Naive thymus-derived CD4-positive, alpha-beta T cell (primary cell): ENCODE measurements at regions of chr16 and their contacts with region 1.

Region 1: DNA sequence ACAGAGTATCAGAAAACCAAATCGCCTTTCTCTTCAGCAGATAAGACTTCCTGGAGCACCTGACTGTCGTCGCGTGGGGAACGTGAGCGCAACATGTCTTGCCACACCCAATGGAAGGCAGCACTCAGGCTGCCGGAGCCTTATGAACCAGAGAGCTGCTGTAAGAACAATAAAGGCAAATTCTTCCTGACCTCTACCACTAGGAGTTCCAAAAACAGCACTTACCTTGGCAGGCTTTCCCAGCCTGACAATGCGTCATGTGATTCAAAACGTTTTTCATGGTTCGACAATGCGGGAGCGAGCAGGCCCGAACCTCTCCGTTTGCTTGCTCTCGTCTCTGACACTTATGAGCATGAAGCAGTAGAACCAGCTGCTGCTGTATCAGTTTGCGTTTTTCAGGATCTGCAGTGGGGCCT is 75.8 kb upstream of the TRAP1 start:
- DNase-seq: peak in 2 of 9 donors; percentile 18 to 21
- ATAC-seq: no peak
- H3K4me3 ChIP-seq: no peak overlapping the region
- H3K4me3 Mint-ChIP-seq: peak overlapping the region in 4 of 10 donors; percentile 16 to 50 (median 33)
- H3K27ac ChIP-seq: no peak overlapping the region
- H3K27ac Mint-ChIP-seq: peak overlapping the region in 1 of 9 donors; percentile 21
- H3K4me1 ChIP-seq: peaks cover 43 to 46% of the 10 kb centered on the region in 2 donors
- H3K4me1 Mint-ChIP-seq: peaks cover 54 to 95% (median 81%) of the 10 kb centered on the region in 7 donors
- H3K27me3 ChIP-seq: no peaks in the 10 kb centered on the region
- H3K27me3 Mint-ChIP-seq: peaks cover 0 to 6% (median 0%) of the 10 kb centered on the region in 5 donors

Region 2: DNA sequence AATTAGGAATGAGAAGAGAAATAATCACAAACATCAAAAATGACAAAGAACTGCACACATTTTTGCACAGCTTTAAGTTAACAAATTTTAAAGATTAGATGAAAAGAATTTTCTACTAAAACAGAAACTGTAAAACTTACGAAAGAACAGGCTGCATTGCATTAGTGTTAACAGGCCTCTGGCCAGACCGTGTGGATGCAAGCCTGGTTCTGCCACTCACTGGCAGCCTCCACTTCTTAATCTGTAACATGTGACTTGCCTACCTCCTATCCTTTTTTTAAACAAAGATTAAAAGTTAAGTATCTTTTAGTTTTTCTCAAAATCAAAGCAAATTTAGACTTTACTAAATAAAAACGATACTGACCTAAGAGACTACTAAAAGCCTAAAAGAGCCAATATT is 49.8 kb after region 1 on chr16:
- CTCF ChIA-PET with region 1: no interaction called
- POLR2A ChIA-PET with region 1: no interaction called
- intact Hi-C with region 1: loop called in 1 of 2 experiments (anchors 10 kb)
- DNase-seq: no peak
- ATAC-seq: no peak
- H3K4me3 ChIP-seq: no peak overlapping the region
- H3K4me3 Mint-ChIP-seq: peak overlapping the region in 1 of 10 donors; percentile 27
- H3K27ac ChIP-seq: no peak overlapping the region
- H3K27ac Mint-ChIP-seq: no peak overlapping the region
- H3K4me1 ChIP-seq: peaks cover 8 to 17% of the 10 kb centered on the region in 2 donors
- H3K4me1 Mint-ChIP-seq: peaks cover 17 to 86% (median 80%) of the 10 kb centered on the region in 7 donors
- H3K27me3 ChIP-seq: no peaks in the 10 kb centered on the region
- H3K27me3 Mint-ChIP-seq: no peaks in the 10 kb centered on the region